Sigmoid colon (tissue), 7 donors: ENCODE measurements at regions of chr13 and their contacts with region 1.

Region 1: DNA sequence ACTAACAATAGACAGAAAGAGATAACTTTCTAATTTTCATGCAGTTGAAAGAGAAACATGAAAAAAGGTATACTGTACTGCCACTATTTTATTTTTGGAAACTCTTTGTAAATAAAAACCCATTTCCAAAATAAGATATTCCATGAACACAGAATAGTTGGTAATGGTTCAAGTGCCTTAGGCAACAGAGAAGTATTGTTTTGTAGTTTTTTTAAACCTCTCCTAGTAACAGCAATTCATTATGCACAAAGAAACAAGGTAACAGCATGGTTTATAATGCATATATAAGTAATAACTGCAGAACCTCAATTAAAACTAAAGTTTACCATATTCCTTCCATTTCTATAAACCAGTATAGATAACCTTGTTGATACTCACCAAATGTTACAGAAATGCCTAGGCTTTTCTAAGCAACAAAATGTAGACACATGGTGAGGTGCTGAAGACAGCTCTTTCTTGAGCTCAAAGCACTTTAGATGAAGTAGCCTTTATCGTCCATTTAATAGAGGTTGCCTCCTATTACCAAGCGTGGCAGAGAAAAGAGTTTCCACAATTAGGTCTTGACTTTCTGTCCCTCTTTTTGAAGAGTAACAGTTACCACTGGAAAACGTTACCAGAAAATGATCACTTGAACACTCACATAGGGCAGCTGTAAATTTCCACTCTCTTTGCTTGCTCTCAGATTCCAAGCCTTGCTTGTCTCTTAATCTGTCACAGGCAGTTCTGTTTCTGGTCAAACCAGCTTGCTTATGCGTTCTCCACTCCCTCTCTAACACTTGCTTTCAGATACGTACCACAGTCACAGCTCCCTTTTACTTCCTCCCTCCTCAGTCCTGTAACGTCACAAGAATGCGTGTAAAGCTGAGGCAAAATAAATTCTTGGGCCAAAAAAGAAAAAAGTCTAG is 42.9 kb downstream of the CAB39L start:
- DNase-seq: peak; percentile 80
- H3K4me3 ChIP-seq: peak overlapping the region; percentile 42 to 56 (median 52)
- H3K27ac ChIP-seq: peak overlapping the region; percentile 72 to 89 (median 86)
- H3K4me1 ChIP-seq: peaks cover 0 to 41% (median 26%) of the 10 kb centered on the region in 4 donors
- H3K27me3 ChIP-seq: no peaks in the 10 kb centered on the region
- CTCF ChIP-seq: no peak
- EP300 ChIP-seq: peak; percentile 43 to 76 (median 72)
- POLR2A ChIP-seq: peak in 1 of 2 donors; percentile 57

Region 2: GRCh38 chr13:49308089-49308875 is 92.7 kb before region 1 on chr13:
- intact Hi-C with region 1: loop called (anchors 2 kb)
- DNase-seq: peak; percentile 98
- H3K4me3 ChIP-seq: no peak overlapping the region
- H3K27ac ChIP-seq: peak overlapping the region; percentile 82 to 89 (median 84)
- H3K4me1 ChIP-seq: peaks cover 0 to 76% (median 63%) of the 10 kb centered on the region in 4 donors
- H3K27me3 ChIP-seq: no peaks in the 10 kb centered on the region
- CTCF ChIP-seq: no peak
- EP300 ChIP-seq: peak; percentile 57 to 90 (median 75)
- POLR2A ChIP-seq: no peak

Region 3: GRCh38 chr13:49367640-49368422 is 33.2 kb before region 1 on chr13:
- intact Hi-C with region 1: loop called (anchors 2 kb)
- DNase-seq: no peak
- H3K4me3 ChIP-seq: peak overlapping the region in 2 of 4 donors; percentile 1 to 9
- H3K27ac ChIP-seq: peak overlapping the region; percentile 60 to 76 (median 72)
- H3K4me1 ChIP-seq: peaks cover 0 to 71% (median 59%) of the 10 kb centered on the region in 4 donors
- H3K27me3 ChIP-seq: no peaks in the 10 kb centered on the region
- CTCF ChIP-seq: peak in 1 of 4 experiments; percentile 7
- EP300 ChIP-seq: peak in 1 of 4 donors; percentile 29
- POLR2A ChIP-seq: no peak